CD4-positive, alpha-beta memory T cell (primary cell): ENCODE measurements at regions of chr19 and their contacts with region 1.

Region 1: GRCh38 chr19:38769635-38770211 is 3.6 kb downstream of the LGALS7 start:
- DNase-seq: peak; percentile 87 to 94 (median 90)
- H3K4me3 ChIP-seq: peak overlapping the region in 1 of 2 donors; percentile 47
- H3K4me3 Mint-ChIP-seq: peak overlapping the region; percentile 37 to 71 (median 64)
- H3K27ac ChIP-seq: peak overlapping the region; percentile 48
- H3K27ac Mint-ChIP-seq: peak overlapping the region; percentile 78 to 95 (median 91)
- H3K4me1 ChIP-seq: peaks cover 6% of the 10 kb centered on the region
- H3K4me1 Mint-ChIP-seq: peaks cover 6 to 8% (median 7%) of the 10 kb centered on the region in 4 donors
- H3K27me3 ChIP-seq: no peaks in the 10 kb centered on the region
- H3K27me3 Mint-ChIP-seq: no peaks in the 10 kb centered on the region

Region 2: DNA sequence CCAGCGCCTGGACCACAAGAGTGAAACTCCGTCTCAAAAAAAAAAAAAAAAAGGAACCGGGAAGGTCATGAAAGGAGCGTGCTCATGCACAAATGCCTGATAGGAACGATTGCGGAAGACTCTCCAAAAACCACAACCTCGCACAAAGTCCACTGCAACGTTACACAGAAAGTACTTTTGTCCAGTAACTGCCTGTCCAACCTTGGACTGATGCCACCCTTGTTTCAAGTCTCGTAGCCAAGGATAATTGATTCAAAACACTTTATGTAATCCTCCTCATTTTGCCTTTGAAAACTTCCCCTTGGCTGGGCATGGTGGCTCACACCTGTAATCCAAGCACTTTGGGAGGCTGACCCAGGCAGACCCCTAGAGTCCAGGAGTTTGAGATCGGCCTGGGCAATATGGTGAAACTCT is 10.1 kb before region 1 on chr19:
- CTCF ChIA-PET with region 1: interaction called, 15 read pairs
- POLR2A ChIA-PET with region 1: interaction called, 5 read pairs
- intact Hi-C with region 1: no loop called
- DNase-seq: no peak
- H3K4me3 ChIP-seq: no peak overlapping the region
- H3K4me3 Mint-ChIP-seq: no peak overlapping the region
- H3K27ac ChIP-seq: no peak overlapping the region
- H3K27ac Mint-ChIP-seq: no peak overlapping the region
- H3K4me1 ChIP-seq: no peaks in the 10 kb centered on the region
- H3K4me1 Mint-ChIP-seq: peaks cover 0 to 5% (median 0%) of the 10 kb centered on the region in 4 donors
- H3K27me3 ChIP-seq: no peaks in the 10 kb centered on the region
- H3K27me3 Mint-ChIP-seq: peaks cover 0 to 2% of the 10 kb centered on the region in 2 donors

Region 3: DNA sequence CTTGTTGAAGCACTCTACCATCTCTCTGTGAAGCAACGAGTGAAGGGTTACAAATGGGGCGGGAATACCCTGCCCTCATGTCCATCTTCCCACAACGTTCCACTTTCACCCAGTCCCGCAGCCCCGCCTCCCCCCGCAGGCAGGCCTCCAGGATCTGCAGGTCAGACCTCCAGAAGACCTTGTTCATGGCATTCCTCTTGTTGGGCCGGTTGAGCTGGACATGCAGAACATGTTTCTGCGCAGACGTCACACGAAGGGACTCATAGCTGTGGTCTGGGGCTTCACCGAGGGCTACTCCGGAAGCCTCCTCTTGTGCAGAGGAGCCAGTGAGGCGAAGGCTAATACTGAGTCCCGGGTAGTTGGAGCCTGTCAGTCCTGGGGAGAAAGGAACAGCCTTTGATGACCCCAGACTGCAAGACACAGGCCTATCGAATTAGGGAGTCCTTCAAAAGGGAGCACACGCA is 61.5 kb after region 1 on chr19:
- CTCF ChIA-PET with region 1: interaction called, 12 read pairs
- POLR2A ChIA-PET with region 1: interaction called, 13 read pairs
- intact Hi-C with region 1: no loop called
- DNase-seq: peak in 1 of 5 donors; percentile 57
- H3K4me3 ChIP-seq: peak overlapping the region; percentile 82 to 87
- H3K4me3 Mint-ChIP-seq: peak overlapping the region; percentile 88 to 95 (median 94)
- H3K27ac ChIP-seq: peak overlapping the region; percentile 79
- H3K27ac Mint-ChIP-seq: peak overlapping the region; percentile 92 to 98 (median 95)
- H3K4me1 ChIP-seq: peaks cover 22% of the 10 kb centered on the region
- H3K4me1 Mint-ChIP-seq: peaks cover 17 to 50% (median 32%) of the 10 kb centered on the region in 4 donors
- H3K27me3 ChIP-seq: no peaks in the 10 kb centered on the region
- H3K27me3 Mint-ChIP-seq: no peaks in the 10 kb centered on the region

Region 4: DNA sequence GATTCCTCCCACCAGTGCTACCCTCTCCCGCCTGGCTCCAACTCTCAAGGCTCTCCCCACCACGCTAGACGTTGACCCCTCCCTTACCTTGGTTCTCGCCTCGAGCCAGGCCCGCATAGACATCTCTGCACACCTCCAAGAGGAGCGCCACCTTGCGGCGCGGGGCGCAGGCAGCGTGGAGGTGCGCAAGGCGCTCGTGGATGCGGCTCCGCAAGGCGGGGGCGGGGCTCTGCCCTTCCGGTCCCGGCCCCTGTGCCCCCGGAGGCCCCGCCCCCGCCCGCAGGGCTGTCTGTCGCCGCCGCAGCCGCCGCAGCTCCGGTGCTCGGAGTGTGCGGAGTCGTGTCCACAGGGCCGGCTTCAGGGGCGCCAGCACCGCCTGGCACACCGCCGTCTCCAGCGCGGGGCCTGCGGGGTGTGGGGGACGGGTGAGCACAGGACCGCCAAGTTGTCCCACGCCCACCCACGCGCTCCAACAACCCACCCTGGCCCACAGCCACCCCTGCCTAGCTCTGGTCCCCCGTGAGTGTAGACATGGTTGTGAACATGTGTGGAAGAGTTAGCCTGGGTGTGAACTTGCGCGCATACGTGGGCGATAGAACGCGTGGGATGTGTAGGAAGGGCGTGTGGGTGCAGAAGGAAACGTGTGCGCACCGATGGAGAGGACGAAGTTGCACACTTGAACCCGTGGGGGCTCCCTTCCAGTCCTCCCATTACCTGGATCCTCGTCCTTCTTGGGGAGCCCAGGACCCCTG is 100.3 kb after region 1 on chr19:
- CTCF ChIA-PET with region 1: interaction called, 15 read pairs
- POLR2A ChIA-PET with region 1: interaction called, 19 read pairs
- intact Hi-C with region 1: loop called (anchors 2 kb)
- DNase-seq: peak; percentile 92 to 96 (median 93)
- H3K4me3 ChIP-seq: peak overlapping the region; percentile 29 to 60
- H3K4me3 Mint-ChIP-seq: peak overlapping the region; percentile 88 to 94 (median 91)
- H3K27ac ChIP-seq: peak overlapping the region; percentile 66
- H3K27ac Mint-ChIP-seq: peak overlapping the region; percentile 83 to 97 (median 94)
- H3K4me1 ChIP-seq: peaks cover 40% of the 10 kb centered on the region
- H3K4me1 Mint-ChIP-seq: peaks cover 23 to 53% (median 38%) of the 10 kb centered on the region in 4 donors
- H3K27me3 ChIP-seq: no peaks in the 10 kb centered on the region
- H3K27me3 Mint-ChIP-seq: no peaks in the 10 kb centered on the region

Region 5: DNA sequence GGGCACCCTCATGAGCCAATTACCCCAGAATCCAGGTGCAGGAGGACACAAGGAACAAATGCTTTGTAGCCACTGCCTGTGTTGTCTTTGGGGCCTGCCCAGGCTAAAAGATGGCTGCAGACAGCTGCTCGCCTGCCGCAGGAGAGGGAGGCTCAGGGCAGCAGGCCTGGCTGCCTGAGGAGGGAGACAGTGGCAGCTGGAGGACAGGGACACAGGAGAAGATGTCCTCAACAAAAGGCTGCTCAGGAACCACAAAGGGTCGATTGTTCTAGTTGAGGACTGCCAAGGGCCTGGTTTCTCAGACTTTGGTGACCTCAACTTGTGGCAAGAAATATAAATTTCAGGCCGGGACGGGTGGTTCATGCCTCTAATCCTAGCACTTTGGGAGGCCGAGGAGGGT is 122.0 kb after region 1 on chr19:
- CTCF ChIA-PET with region 1: interaction called, 31 read pairs
- POLR2A ChIA-PET with region 1: interaction called, 6 read pairs
- intact Hi-C with region 1: no loop called
- DNase-seq: no peak
- H3K4me3 ChIP-seq: no peak overlapping the region
- H3K4me3 Mint-ChIP-seq: no peak overlapping the region
- H3K27ac ChIP-seq: no peak overlapping the region
- H3K27ac Mint-ChIP-seq: peak overlapping the region in 1 of 7 donors; percentile 13
- H3K4me1 ChIP-seq: peaks cover 4% of the 10 kb centered on the region
- H3K4me1 Mint-ChIP-seq: peaks cover 2 to 13% (median 5%) of the 10 kb centered on the region in 4 donors
- H3K27me3 ChIP-seq: no peaks in the 10 kb centered on the region
- H3K27me3 Mint-ChIP-seq: no peaks in the 10 kb centered on the region

Region 6: GRCh38 chr19:39846176-39846677 is 1076.5 kb after region 1 on chr19 and contains the start of gene FBL:
- CTCF ChIA-PET with region 1: no interaction called
- POLR2A ChIA-PET with region 1: no interaction called
- intact Hi-C with region 1: no loop called
- DNase-seq: peak; percentile 94 to 98 (median 96)
- H3K4me3 ChIP-seq: peak within 1 kb of the TSS; percentile 63 to 78
- H3K4me3 Mint-ChIP-seq: peak within 1 kb of the TSS; percentile 88 to 93 (median 92)
- H3K27ac ChIP-seq: peak within 1 kb of the TSS; percentile 86
- H3K27ac Mint-ChIP-seq: peak within 1 kb of the TSS; percentile 92 to 98 (median 97)
- H3K4me1 ChIP-seq: peaks cover 49% of the 10 kb centered on the region
- H3K4me1 Mint-ChIP-seq: peaks cover 38 to 62% (median 47%) of the 10 kb centered on the region in 4 donors
- H3K27me3 ChIP-seq: no peaks in the 10 kb centered on the region
- H3K27me3 Mint-ChIP-seq: no peaks in the 10 kb centered on the region
- total RNA-seq, gene FBL: 282 to 295 TPM